ENCODE measurements at regions of chr15 and their contacts with region 1.

Region 1: DNA sequence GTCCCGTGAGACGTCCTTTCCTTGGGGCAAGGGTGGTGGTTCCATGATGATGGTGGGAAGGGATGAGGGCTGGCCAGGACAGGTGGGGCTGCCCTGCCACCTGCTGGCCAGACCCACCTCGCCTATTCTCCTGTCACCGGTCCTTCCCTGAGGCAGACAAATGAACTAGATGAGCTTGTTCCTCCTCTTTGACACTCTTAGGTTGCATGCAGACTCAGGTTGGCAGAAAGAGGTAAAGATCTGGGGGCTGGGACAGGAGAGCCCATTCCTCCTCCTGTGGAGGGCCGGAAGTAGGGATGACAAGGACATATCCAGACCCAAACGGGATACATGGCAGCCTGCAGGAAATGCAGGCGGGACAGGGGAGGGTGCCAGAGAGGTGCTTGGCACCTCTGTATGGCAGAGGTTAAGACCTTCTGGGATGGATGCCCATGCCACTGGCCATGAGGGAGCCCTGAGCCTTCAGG is 38.6 kb downstream of the ACSBG1 start:
- DNase-seq: peak in 1 of 2 experiments; percentile 62
- H3K4me3 ChIP-seq: no peak overlapping the region
- H3K4me3 Mint-ChIP-seq: no peak overlapping the region
- H3K27ac Mint-ChIP-seq: no peak overlapping the region
- H3K4me1 ChIP-seq: no peaks in the 10 kb centered on the region
- H3K4me1 Mint-ChIP-seq: no peaks in the 10 kb centered on the region
- H3K27me3 ChIP-seq: no peaks in the 10 kb centered on the region
- H3K27me3 Mint-ChIP-seq: peaks cover 3% of the 10 kb centered on the region
- CTCF ChIP-seq: peak; percentile 83 to 89

Region 2: DNA sequence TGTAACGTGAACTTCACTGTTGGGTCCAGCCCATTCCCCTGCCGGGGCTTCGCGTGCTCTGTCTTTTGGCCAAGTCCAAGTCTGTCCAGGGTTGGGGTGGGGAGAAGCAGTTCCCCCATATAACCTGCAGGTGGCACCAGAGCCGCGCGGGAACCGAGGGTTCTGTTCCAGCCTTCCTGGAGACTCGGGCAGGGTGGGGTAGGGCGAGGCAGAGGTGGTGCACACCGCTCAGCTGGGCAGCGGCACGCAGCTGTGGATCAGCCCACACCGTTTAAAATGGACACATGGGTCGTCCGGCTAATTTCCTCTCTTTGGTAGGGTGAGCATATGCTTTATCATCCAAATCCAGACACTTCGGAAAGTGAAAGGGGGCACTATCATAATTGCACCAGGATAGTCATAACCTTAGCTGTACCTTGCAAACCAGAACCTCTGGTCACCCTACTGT is 236.3 kb before region 1 on chr15:
- CTCF ChIA-PET with region 1: interaction called, 7 read pairs
- POLR2A ChIA-PET with region 1: no interaction called
- intact Hi-C with region 1: loop called (anchors 2 kb)
- DNase-seq: peak; percentile 78 to 87
- H3K4me3 ChIP-seq: no peak overlapping the region
- H3K4me3 Mint-ChIP-seq: peak overlapping the region; percentile 19
- H3K27ac Mint-ChIP-seq: no peak overlapping the region
- H3K4me1 ChIP-seq: no peaks in the 10 kb centered on the region
- H3K4me1 Mint-ChIP-seq: no peaks in the 10 kb centered on the region
- H3K27me3 ChIP-seq: no peaks in the 10 kb centered on the region
- H3K27me3 Mint-ChIP-seq: peaks cover 9% of the 10 kb centered on the region
- CTCF ChIP-seq: peak; percentile 80 to 91

Region 3: GRCh38 chr15:78131295-78132061 is 64.3 kb before region 1 on chr15 and contains the start of gene CIB2:
- CTCF ChIA-PET with region 1: interaction called, 16 read pairs
- POLR2A ChIA-PET with region 1: no interaction called
- intact Hi-C with region 1: loop called (anchors 1 kb)
- DNase-seq: peak; percentile 59 to 82
- H3K4me3 ChIP-seq: peak within 1 kb of the TSS; percentile 69
- H3K4me3 Mint-ChIP-seq: peak within 1 kb of the TSS; percentile 81
- H3K27ac Mint-ChIP-seq: peak within 1 kb of the TSS; percentile 57
- H3K4me1 ChIP-seq: peaks cover 18% of the 10 kb centered on the region
- H3K4me1 Mint-ChIP-seq: peaks cover 17% of the 10 kb centered on the region
- H3K27me3 ChIP-seq: no peaks in the 10 kb centered on the region
- H3K27me3 Mint-ChIP-seq: no peaks in the 10 kb centered on the region
- CTCF ChIP-seq: peak; percentile 14 to 62
- total RNA-seq, gene CIB2: 0.67 and 0.75 TPM in 2 replicates

Region 4: GRCh38 chr15:78149068-78149804 is 46.5 kb before region 1 on chr15 and contains the start of gene IDH3A:
- CTCF ChIA-PET with region 1: no interaction called
- POLR2A ChIA-PET with region 1: no interaction called
- intact Hi-C with region 1: loop called (anchors 1 kb)
- DNase-seq: peak; percentile 96 to 98
- H3K4me3 ChIP-seq: peak within 1 kb of the TSS; percentile 73
- H3K4me3 Mint-ChIP-seq: peak within 1 kb of the TSS; percentile 93
- H3K27ac Mint-ChIP-seq: peak within 1 kb of the TSS; percentile 82
- H3K4me1 ChIP-seq: 0 out of 2 replicates have a peak, but pooled peaks cover 3% of the 10 kb centered on the region
- H3K4me1 Mint-ChIP-seq: no peaks in the 10 kb centered on the region
- H3K27me3 ChIP-seq: no peaks in the 10 kb centered on the region
- H3K27me3 Mint-ChIP-seq: no peaks in the 10 kb centered on the region
- CTCF ChIP-seq: no peak
- total RNA-seq, gene IDH3A: 67.3 and 71.1 TPM in 2 replicates

Region 5: DNA sequence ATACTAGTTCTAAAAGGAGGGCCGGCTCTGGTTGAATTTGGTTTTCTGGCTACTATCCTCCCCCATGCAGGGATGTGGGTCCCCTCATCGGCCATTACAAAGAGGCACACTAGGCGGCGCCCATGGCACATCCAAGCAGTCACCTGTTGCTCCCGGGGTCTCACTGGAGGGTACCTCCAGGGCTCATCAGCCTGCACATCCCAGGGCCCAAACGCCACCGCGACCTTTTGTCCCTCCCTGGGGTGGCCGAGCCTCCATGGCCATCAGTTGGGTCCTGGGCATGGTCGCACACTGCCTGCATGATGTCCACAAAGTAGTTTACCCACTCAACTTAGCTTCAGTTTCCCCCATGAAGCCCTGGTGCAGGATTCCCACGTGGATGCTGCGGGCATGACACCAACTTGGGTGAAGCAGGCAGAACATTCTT is 18.3 kb before region 1 on chr15:
- CTCF ChIA-PET with region 1: interaction called, 6 read pairs
- POLR2A ChIA-PET with region 1: no interaction called
- intact Hi-C with region 1: loop called (anchors 1 kb)
- DNase-seq: peak in 1 of 2 experiments; percentile 42
- H3K4me3 ChIP-seq: no peak overlapping the region
- H3K4me3 Mint-ChIP-seq: no peak overlapping the region
- H3K27ac Mint-ChIP-seq: no peak overlapping the region
- H3K4me1 ChIP-seq: no peaks in the 10 kb centered on the region
- H3K4me1 Mint-ChIP-seq: no peaks in the 10 kb centered on the region
- H3K27me3 ChIP-seq: no peaks in the 10 kb centered on the region
- H3K27me3 Mint-ChIP-seq: no peaks in the 10 kb centered on the region
- CTCF ChIP-seq: peak; percentile 55 to 65

Region 6: GRCh38 chr15:78241007-78241406 is 45.2 kb after region 1 on chr15:
- CTCF ChIA-PET with region 1: interaction called, 5 read pairs
- POLR2A ChIA-PET with region 1: no interaction called
- intact Hi-C with region 1: loop called (anchors 1 kb)
- DNase-seq: peak; percentile 80 to 88
- H3K4me3 ChIP-seq: no peak overlapping the region
- H3K4me3 Mint-ChIP-seq: no peak overlapping the region
- H3K27ac Mint-ChIP-seq: no peak overlapping the region
- H3K4me1 ChIP-seq: peaks cover 8% of the 10 kb centered on the region; the same call in 1 of the 2 replicates
- H3K4me1 Mint-ChIP-seq: peaks cover 6% of the 10 kb centered on the region
- H3K27me3 ChIP-seq: no peaks in the 10 kb centered on the region
- H3K27me3 Mint-ChIP-seq: no peaks in the 10 kb centered on the region
- CTCF ChIP-seq: peak; percentile 81 to 88